ENCODE measurements at regions of chr3 and their contacts with region 1.

Region 1: GRCh38 chr3:52056968-52057805 is 816 bp upstream of the DUSP7 start:
- DNase-seq: peak; percentile 100
- ATAC-seq: peak; percentile 73
- H3K4me3 ChIP-seq: peak overlapping the region; percentile 70
- H3K27ac ChIP-seq: peak overlapping the region; percentile 55
- H3K4me1 ChIP-seq: peaks cover 40% of the 10 kb centered on the region
- H3K27me3 ChIP-seq: no peaks in the 10 kb centered on the region
- CTCF ChIP-seq: no peak

Region 2: DNA sequence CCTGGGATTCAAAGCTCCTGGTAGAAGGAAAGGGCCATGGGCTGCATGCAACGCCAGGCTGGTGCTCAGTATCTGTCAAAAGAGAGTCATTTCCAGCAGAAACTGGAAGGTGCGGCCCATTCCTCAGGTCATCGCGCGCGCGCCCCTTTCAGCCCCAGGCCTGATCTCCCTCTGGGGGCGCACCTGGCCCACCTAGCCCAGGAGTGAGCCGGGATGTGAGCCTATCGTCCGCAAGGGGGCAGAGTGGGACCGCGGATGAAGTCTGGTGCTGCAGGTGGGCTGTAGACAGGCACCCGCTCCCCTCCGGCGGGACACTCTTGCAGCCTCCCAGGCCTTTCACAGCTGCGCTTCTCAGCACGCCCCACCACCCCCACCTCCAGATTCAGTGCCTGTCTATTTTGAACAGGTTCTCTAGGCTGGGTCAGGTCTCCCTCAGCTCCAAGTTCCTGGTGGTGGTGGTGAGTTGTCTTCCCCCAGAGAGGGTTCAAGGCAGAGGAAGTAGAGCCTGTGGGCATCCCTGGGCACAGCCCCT is 55.7 kb before region 1 on chr3:
- CTCF ChIA-PET with region 1: interaction called, 14 read pairs
- POLR2A ChIA-PET with region 1: no interaction called
- intact Hi-C with region 1: loop called (anchors 1 kb)
- DNase-seq: peak; percentile 85
- ATAC-seq: peak; percentile 82
- H3K4me3 ChIP-seq: peak overlapping the region; percentile 11; the same call in 1 of the 2 replicates
- H3K27ac ChIP-seq: no peak overlapping the region
- H3K4me1 ChIP-seq: peaks cover 10% of the 10 kb centered on the region
- H3K27me3 ChIP-seq: no peaks in the 10 kb centered on the region
- CTCF ChIP-seq: peak; percentile 99

Region 3: GRCh38 chr3:52046186-52046913 is 10.8 kb before region 1 on chr3:
- CTCF ChIA-PET with region 1: interaction called, 7 read pairs
- POLR2A ChIA-PET with region 1: interaction called, 19 read pairs
- intact Hi-C with region 1: no loop called
- DNase-seq: peak; percentile 98
- ATAC-seq: peak; percentile 78
- H3K4me3 ChIP-seq: peak overlapping the region; percentile 41; the same call in 1 of the 2 replicates
- H3K27ac ChIP-seq: peak overlapping the region; percentile 99
- H3K4me1 ChIP-seq: peaks cover 37% of the 10 kb centered on the region
- H3K27me3 ChIP-seq: no peaks in the 10 kb centered on the region
- CTCF ChIP-seq: no peak

Region 4: GRCh38 chr3:52070724-52071621 is 13.8 kb after region 1 on chr3:
- CTCF ChIA-PET with region 1: no interaction called
- POLR2A ChIA-PET with region 1: no interaction called
- intact Hi-C with region 1: no loop called
- DNase-seq: no peak
- ATAC-seq: no peak
- H3K4me3 ChIP-seq: no peak overlapping the region
- H3K27ac ChIP-seq: no peak overlapping the region
- H3K4me1 ChIP-seq: no peaks in the 10 kb centered on the region
- H3K27me3 ChIP-seq: no peaks in the 10 kb centered on the region
- CTCF ChIP-seq: no peak

Region 5: DNA sequence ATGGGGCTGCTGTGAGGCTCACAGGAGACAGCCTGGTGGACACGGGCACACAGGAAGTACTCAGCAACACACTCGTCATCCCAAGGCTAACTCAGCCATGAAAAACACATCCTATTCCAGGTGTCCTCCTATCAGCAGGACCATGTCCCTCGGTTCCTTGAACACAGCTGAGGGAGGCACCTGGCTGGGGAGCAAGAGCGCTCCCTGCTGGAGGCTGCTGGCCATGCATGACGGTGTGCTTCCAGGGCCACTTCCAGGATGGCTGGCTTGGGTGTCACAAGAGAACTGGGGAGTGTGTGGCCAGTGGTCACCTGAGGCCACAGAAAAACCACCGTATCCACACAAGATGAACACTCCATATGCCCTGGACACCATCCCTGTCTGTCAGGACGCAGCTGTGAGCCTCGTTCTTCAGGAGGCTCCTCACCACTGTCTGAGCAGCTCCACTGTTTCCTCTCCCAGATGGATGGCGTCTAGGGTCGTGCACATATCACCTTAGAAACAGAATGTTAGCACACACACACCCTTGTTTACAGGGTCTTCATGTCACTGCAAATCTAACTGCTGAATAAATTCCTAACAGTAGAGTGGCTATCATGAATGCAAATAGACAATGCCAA is 66.0 kb after region 1 on chr3:
- CTCF ChIA-PET with region 1: interaction called, 6 read pairs
- POLR2A ChIA-PET with region 1: no interaction called
- intact Hi-C with region 1: loop called (anchors 1 kb)
- DNase-seq: peak; percentile 77
- ATAC-seq: peak; percentile 77
- H3K4me3 ChIP-seq: no peak overlapping the region
- H3K27ac ChIP-seq: no peak overlapping the region
- H3K4me1 ChIP-seq: peaks cover 7% of the 10 kb centered on the region
- H3K27me3 ChIP-seq: no peaks in the 10 kb centered on the region
- CTCF ChIP-seq: peak; percentile 95

Region 6: GRCh38 chr3:52154117-52155094 is 97.2 kb after region 1 on chr3 and contains the start of gene POC1A:
- CTCF ChIA-PET with region 1: interaction called, 3 read pairs
- POLR2A ChIA-PET with region 1: interaction called, 6 read pairs
- intact Hi-C with region 1: loop called (anchors 1 kb)
- DNase-seq: peak; percentile 98
- ATAC-seq: peak; percentile 95
- H3K4me3 ChIP-seq: peak within 1 kb of the TSS; percentile 89
- H3K27ac ChIP-seq: peak within 1 kb of the TSS; percentile 71
- H3K4me1 ChIP-seq: peaks cover 17% of the 10 kb centered on the region
- H3K27me3 ChIP-seq: no peaks in the 10 kb centered on the region
- CTCF ChIP-seq: no peak
- total RNA-seq, gene POC1A: 41.5 and 43.0 TPM in 2 replicates

Region 7: DNA sequence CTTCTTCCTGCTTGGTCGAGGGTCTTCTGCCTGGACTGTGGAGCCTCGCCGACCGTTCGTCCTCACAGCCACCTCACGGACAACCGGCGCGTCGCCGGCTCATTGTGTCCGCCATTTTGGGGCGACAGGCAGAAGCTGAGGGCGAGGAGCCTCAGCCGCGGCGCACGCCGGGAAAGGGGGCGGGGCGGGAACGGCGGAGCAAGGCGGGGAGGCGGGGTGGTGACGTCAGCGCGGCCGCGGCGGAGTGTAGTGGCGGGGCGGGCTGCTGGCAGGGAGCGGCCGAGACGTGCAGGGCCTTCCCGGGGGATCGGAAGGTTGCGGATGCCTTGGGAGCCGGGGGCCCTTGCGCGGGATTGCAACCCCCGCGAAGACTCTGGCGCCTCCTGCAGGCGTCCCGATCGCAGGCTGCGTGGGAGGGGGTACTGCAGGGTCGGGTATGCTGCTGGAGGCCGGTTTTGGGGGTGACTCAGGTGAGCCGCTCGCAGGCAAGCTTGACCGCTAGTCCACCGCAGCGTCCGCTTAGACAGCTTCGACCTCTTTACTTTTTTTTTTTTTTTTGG is 221.4 kb after region 1 on chr3 and contains the start of gene WDR82:
- CTCF ChIA-PET with region 1: no interaction called
- POLR2A ChIA-PET with region 1: no interaction called
- intact Hi-C with region 1: loop called (anchors 5 kb)
- DNase-seq: peak; percentile 94
- ATAC-seq: peak; percentile 86
- H3K4me3 ChIP-seq: peak within 1 kb of the TSS; percentile 76
- H3K27ac ChIP-seq: peak within 1 kb of the TSS; percentile 86
- H3K4me1 ChIP-seq: peaks cover 29% of the 10 kb centered on the region
- H3K27me3 ChIP-seq: no peaks in the 10 kb centered on the region
- CTCF ChIP-seq: peak; percentile 48; the same call in 1 of the 2 replicates
- total RNA-seq, gene WDR82: 56.2 and 56.4 TPM in 2 replicates

Measured in PC-3 (cell line).